Panc1 (cell line): ENCODE measurements at regions of chr7 and their contacts with region 1.

Region 1: GRCh38 chr7:99949638-99950228 is 20.3 kb upstream of the GJC3 start:
- DNase-seq: no peak
- ATAC-seq: no peak
- H3K4me3 ChIP-seq: no peak overlapping the region
- H3K27ac ChIP-seq: no peak overlapping the region
- H3K4me1 ChIP-seq: no peaks in the 10 kb centered on the region
- H3K27me3 ChIP-seq: no peaks in the 10 kb centered on the region
- CTCF ChIP-seq: peak; percentile 26; the same call in 1 of the 2 replicates

Region 2: DNA sequence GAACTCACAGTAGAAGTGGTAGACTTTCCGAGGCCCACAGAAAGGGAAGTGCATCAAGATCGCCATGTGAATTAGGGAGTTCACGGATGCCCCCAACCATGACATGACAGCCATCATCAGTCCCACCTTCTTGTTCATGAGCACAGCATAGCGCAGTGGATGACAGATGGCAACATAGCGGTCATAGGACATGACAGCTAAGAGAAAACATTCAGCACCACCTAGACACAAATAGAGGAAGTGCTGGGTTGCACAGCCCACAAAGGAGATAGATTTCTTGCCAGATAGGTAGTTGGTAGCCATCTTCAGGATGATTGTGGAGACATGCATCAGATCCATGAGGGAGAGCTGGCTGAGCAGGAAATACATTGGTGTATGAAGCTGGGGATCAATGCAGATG is 73.2 kb before region 1 on chr7:
- CTCF ChIA-PET with region 1: no interaction called
- POLR2A ChIA-PET with region 1: interaction called, 14 read pairs
- in situ Hi-C with region 1: no loop called
- intact Hi-C with region 1: no loop called
- DNase-seq: no peak
- ATAC-seq: no peak
- H3K4me3 ChIP-seq: no peak overlapping the region
- H3K27ac ChIP-seq: no peak overlapping the region
- H3K4me1 ChIP-seq: no peaks in the 10 kb centered on the region
- H3K27me3 ChIP-seq: peaks cover 6% of the 10 kb centered on the region; the same call in 1 of the 2 replicates
- CTCF ChIP-seq: no peak

Region 3: DNA sequence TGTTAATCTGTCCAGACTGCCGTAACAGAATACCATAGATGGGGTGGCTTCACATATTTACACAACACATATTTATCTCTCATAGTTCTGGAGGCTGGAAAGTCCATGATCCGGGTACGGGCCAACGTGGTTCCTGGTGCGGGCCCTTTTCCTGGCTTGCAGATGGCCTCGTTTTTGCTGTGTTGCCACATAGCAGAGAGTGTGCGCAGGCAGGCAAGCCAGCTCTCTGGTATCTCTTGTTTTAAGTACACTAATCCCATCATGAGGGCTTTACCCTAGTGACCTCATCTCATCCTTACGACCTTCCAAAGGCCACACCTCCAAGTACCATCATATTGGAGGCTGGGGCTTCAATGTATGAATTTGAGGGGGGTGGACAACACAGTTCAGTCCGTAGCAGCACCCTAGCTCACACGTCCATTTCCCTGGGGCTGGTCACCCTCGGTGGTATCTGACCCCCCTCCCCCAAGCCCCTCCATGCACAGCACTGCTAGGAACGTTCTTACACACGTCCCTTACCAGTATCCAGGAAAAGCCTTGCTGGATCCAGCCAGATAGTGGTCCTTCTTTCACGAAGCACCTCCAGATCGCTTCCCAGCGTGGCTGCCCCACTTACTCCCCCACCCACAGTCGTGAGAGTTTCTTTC is 1889.2 kb after region 1 on chr7:
- CTCF ChIA-PET with region 1: no interaction called
- POLR2A ChIA-PET with region 1: no interaction called
- in situ Hi-C with region 1: no loop called
- intact Hi-C with region 1: no loop called
- DNase-seq: no peak
- ATAC-seq: no peak
- H3K4me3 ChIP-seq: no peak overlapping the region
- H3K27ac ChIP-seq: no peak overlapping the region
- H3K4me1 ChIP-seq: no peaks in the 10 kb centered on the region
- H3K27me3 ChIP-seq: no peaks in the 10 kb centered on the region
- CTCF ChIP-seq: no peak